Activated CD4-positive, alpha-beta memory T cell treated with anti-CD3 and anti-CD28 coated beads for 36 hours (primary cell): ENCODE measurements at regions of chr6 and their contacts with region 1.

Region 1: GRCh38 chr6:122818866-122819265 is 29.8 kb downstream of the SMPDL3A start:
- DNase-seq: no peak
- H3K4me3 Mint-ChIP-seq: no peak overlapping the region
- H3K27ac Mint-ChIP-seq: no peak overlapping the region
- H3K4me1 Mint-ChIP-seq: no peaks in the 10 kb centered on the region
- H3K27me3 Mint-ChIP-seq: no peaks in the 10 kb centered on the region

Region 2: GRCh38 chr6:122798099-122798641 is 20.7 kb before region 1 on chr6:
- CTCF ChIA-PET with region 1: no interaction called
- POLR2A ChIA-PET with region 1: no interaction called
- intact Hi-C with region 1: loop called (anchors 2 kb)
- DNase-seq: peak; percentile 27
- H3K4me3 Mint-ChIP-seq: no peak overlapping the region
- H3K27ac Mint-ChIP-seq: no peak overlapping the region
- H3K4me1 Mint-ChIP-seq: peaks cover 4% of the 10 kb centered on the region
- H3K27me3 Mint-ChIP-seq: no peaks in the 10 kb centered on the region